Upper lobe of right lung (tissue), 1 donor: ENCODE measurements at regions of chr1 and their contacts with region 1.

Region 1: DNA sequence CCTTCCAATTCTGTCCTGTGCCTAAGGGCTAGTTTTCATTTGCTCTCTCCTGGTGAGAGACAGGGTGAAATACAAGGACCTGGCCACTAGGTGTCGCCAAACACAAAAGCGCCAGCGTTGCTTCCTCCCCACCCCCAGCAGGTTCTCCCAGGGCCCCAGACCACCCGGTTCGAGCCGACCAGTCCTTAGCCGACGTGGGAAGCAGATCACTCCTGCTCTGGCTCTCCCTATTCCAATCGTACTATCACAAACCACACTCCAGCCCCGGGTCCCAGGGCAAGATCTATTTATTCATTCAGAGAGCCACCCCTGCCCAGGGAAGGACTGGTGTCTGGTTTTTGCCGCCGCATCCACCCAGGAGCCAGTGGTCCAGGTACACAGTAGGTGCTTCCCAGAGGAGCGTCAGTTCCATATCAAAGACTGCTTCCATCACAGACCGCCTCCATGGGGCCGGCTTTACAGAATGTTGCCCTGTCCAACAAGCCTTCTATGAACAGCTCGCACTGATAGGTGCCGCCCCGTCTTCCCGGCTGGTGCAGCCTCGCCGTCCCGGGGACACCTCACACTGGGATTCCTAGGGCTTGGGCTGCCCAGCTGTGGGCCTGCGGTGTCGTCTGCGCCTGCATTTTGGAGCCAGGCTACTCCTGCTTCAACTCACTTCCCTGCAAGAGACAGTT is 35.0 kb downstream of the CTNNBIP1 start:
- DNase-seq: peak; percentile 77
- ATAC-seq: peak; percentile 88
- H3K4me3 ChIP-seq: no peak overlapping the region
- H3K27ac ChIP-seq: no peak overlapping the region
- H3K4me1 ChIP-seq: peaks cover 5% of the 10 kb centered on the region
- H3K27me3 ChIP-seq: no peaks in the 10 kb centered on the region
- CTCF ChIP-seq: peak; percentile 91

Region 2: DNA sequence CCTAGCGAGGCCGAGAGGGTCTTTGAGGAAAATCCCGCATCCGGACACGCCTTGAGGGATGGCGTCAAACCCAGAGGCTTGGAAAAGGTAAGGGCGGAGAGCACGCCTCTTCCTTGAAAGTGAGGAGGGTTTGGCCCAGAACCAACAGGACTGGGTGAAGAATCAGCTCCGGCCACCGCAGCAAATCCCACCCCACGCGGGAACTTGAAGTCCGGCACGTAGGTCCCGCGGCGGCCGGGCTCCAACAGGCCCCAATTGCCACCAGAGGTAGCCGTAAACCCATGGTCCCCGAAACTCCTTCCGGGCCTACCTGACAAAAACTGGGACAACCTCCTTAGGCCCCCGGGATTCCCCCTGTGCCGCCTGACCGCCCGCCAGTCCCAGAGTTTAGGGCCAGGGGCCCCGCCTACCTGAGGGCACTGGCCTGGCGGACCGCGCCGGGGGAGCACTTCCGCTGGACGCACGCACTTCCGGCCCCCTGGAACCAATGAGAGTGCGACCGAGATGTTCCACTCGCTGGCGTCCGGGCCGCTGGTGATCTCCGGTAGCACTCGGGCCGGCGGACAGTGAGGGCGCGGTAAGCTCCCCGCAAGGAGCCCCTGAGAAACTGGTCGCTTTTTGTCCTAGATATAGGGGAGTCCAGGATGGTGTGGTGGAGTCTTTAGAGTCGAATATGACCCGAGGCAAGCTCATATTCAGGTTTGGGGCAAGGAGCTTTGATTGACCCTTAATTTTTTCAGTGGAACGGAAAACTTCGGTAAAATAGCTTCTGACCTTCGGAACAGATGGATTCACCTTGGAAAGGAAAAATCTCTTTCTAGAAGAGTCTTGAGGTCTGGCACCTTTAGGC is 68.1 kb after region 1 on chr1 and contains the starts of genes LZIC and NMNAT1:
- intact Hi-C with region 1: loop called (anchors 5 kb)
- DNase-seq: peak; percentile 96
- ATAC-seq: peak; percentile 100
- H3K4me3 ChIP-seq: peak within 1 kb of the TSS; percentile 76
- H3K27ac ChIP-seq: peak within 1 kb of the TSS; percentile 88
- H3K4me1 ChIP-seq: peaks cover 14% of the 10 kb centered on the region
- H3K27me3 ChIP-seq: no peaks in the 10 kb centered on the region
- CTCF ChIP-seq: no peak
- total RNA-seq, gene LZIC: 29.1 TPM
- total RNA-seq, gene NMNAT1: 9.1 TPM